ENCODE measurements at regions of chr13 and their contacts with region 1.

Region 1: DNA sequence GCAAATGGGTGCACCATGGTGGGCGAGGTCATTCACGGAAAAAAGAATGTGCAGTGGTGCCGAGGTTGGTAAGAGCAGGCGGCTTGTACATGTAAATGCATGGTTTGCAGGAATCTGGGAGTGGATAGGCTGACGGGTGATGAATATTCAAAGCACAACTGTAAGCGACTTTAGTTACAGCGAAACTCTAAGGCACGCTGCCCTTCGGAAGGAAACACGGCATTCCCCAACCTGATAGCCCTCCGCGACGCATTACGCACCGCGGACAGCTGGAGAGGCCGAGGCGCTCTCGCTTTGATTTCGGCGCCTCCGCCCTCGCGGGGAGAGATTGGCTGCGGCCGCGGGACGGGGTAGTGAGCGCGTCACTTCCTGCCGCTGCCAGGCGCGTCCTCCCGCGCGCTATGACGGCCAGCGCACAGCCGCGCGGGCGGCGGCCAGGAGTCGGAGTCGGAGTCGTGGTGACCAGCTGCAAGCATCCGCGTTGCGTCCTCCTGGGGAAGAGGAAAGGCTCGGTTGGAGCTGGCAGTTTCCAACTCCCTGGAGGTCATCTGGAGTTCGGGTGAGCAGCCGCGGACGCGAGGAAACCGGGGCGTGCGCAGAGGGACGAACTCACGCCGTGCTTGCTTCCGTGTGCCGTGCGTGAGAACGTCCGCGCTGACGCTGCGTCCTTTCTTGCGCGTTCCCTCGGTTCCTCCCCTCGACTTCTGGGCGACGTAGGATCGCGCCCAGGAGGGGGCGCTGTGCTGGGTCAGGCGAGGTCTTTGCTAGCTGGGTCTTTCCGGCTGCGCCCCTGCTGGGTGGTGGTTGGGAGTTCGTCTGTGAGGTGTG is at the start of gene NUDT15:
- DNase-seq: peak; percentile 88 to 99 (median 97)
- ATAC-seq: peak; percentile 90
- H3K4me3 ChIP-seq: peak within 1 kb of the TSS; percentile 81 to 96
- H3K4me3 Mint-ChIP-seq: peak within 1 kb of the TSS; percentile 97
- H3K27ac ChIP-seq: peak within 1 kb of the TSS; percentile 99
- H3K27ac Mint-ChIP-seq: peak within 1 kb of the TSS; percentile 98
- H3K4me1 ChIP-seq: peaks cover 20% of the 10 kb centered on the region
- H3K4me1 Mint-ChIP-seq: peaks cover 32% of the 10 kb centered on the region
- H3K27me3 ChIP-seq: no peaks in the 10 kb centered on the region
- H3K27me3 Mint-ChIP-seq: no peaks in the 10 kb centered on the region
- CTCF ChIP-seq: peak; percentile 99
- total RNA-seq, gene NUDT15: 23.8 to 24.9 TPM

Region 2: GRCh38 chr13:48000778-48001628 is 36.6 kb before region 1 on chr13 and contains the start of gene SUCLA2:
- CTCF ChIA-PET with region 1: no interaction called
- POLR2A ChIA-PET with region 1: interaction called, 5 read pairs
- intact Hi-C with region 1: loop called (anchors 1 kb)
- DNase-seq: peak; percentile 77 to 93 (median 88)
- ATAC-seq: peak; percentile 100
- H3K4me3 ChIP-seq: peak within 1 kb of the TSS; percentile 99
- H3K4me3 Mint-ChIP-seq: peak within 1 kb of the TSS; percentile 95
- H3K27ac ChIP-seq: peak within 1 kb of the TSS; percentile 72 to 81
- H3K27ac Mint-ChIP-seq: peak within 1 kb of the TSS; percentile 91
- H3K4me1 ChIP-seq: peaks cover 16% of the 10 kb centered on the region
- H3K4me1 Mint-ChIP-seq: peaks cover 35% of the 10 kb centered on the region
- H3K27me3 ChIP-seq: no peaks in the 10 kb centered on the region
- H3K27me3 Mint-ChIP-seq: no peaks in the 10 kb centered on the region
- CTCF ChIP-seq: no peak
- total RNA-seq, gene SUCLA2: 20.8 to 22.9 TPM

Region 3: GRCh38 chr13:48014359-48014758 is 23.2 kb before region 1 on chr13:
- CTCF ChIA-PET with region 1: interaction called, 11 read pairs
- POLR2A ChIA-PET with region 1: no interaction called
- intact Hi-C with region 1: no loop called
- DNase-seq: no peak
- ATAC-seq: no peak
- H3K4me3 ChIP-seq: no peak overlapping the region
- H3K4me3 Mint-ChIP-seq: no peak overlapping the region
- H3K27ac ChIP-seq: no peak overlapping the region
- H3K27ac Mint-ChIP-seq: no peak overlapping the region
- H3K4me1 ChIP-seq: no peaks in the 10 kb centered on the region
- H3K4me1 Mint-ChIP-seq: no peaks in the 10 kb centered on the region
- H3K27me3 ChIP-seq: no peaks in the 10 kb centered on the region
- H3K27me3 Mint-ChIP-seq: no peaks in the 10 kb centered on the region
- CTCF ChIP-seq: no peak

Region 4: DNA sequence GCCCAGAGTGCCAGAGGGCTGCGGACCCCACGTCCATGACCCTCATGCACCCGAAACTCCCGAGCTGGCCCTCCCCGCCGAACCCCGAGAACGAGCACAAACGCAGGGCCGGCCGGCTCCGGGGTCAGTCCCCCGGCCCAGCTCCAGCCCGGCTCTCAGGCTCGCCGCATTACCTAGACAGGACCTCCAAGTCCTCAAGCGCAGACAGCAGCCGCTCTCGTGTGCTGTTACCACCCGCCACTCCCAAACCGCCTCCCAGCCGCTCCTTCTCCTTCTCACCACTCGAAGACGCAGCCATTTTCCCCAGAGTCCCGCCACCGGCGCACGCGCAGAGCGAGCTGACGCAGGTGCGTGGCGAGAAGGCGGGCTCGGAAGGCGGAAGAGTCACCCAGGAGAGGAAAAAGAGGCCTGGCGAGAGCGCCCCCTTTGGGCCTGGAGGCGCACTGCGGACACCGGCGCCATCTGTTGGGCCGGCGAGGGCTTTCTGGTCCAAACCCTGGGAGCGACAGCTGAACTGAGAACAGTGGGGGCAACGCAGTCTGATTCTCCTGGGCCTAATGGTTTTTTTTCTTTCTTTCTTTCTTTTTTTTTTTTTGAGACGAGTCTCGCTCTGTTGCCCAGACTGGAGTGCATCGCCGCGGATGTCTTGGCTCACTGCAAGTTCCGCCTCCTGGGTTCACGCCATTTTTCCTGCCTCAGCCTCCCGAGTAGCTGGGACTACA is 57.4 kb after region 1 on chr13 and contains the start of gene MED4:
- CTCF ChIA-PET with region 1: interaction called, 19 read pairs
- POLR2A ChIA-PET with region 1: interaction called, 40 read pairs
- intact Hi-C with region 1: loop called (anchors 1 kb)
- DNase-seq: peak; percentile 96 to 99 (median 97)
- ATAC-seq: peak; percentile 98
- H3K4me3 ChIP-seq: peak within 1 kb of the TSS; percentile 90 to 96
- H3K4me3 Mint-ChIP-seq: peak within 1 kb of the TSS; percentile 96
- H3K27ac ChIP-seq: peak within 1 kb of the TSS; percentile 90 to 92
- H3K27ac Mint-ChIP-seq: peak within 1 kb of the TSS; percentile 97
- H3K4me1 ChIP-seq: peaks cover 21% of the 10 kb centered on the region
- H3K4me1 Mint-ChIP-seq: peaks cover 45% of the 10 kb centered on the region
- H3K27me3 ChIP-seq: no peaks in the 10 kb centered on the region
- H3K27me3 Mint-ChIP-seq: no peaks in the 10 kb centered on the region
- CTCF ChIP-seq: peak; percentile 100
- total RNA-seq, gene MED4: 60.8 to 63.6 TPM

Region 5: GRCh38 chr13:48155848-48156247 is 118.3 kb after region 1 on chr13:
- CTCF ChIA-PET with region 1: no interaction called
- POLR2A ChIA-PET with region 1: no interaction called
- intact Hi-C with region 1: loop called in 1 of 2 experiments (anchors 1 kb)
- DNase-seq: peak in 6 of 9 experiments; percentile 14 to 90 (median 46)
- ATAC-seq: peak; percentile 71
- H3K4me3 ChIP-seq: peak overlapping the region in 1 of 2 experiments; percentile 37
- H3K4me3 Mint-ChIP-seq: peak overlapping the region; percentile 44
- H3K27ac ChIP-seq: peak overlapping the region; percentile 61 to 89
- H3K27ac Mint-ChIP-seq: peak overlapping the region; percentile 96
- H3K4me1 ChIP-seq: peaks cover 75% of the 10 kb centered on the region
- H3K4me1 Mint-ChIP-seq: peaks cover 81% of the 10 kb centered on the region
- H3K27me3 ChIP-seq: no peaks in the 10 kb centered on the region
- H3K27me3 Mint-ChIP-seq: no peaks in the 10 kb centered on the region
- CTCF ChIP-seq: no peak

Region 6: DNA sequence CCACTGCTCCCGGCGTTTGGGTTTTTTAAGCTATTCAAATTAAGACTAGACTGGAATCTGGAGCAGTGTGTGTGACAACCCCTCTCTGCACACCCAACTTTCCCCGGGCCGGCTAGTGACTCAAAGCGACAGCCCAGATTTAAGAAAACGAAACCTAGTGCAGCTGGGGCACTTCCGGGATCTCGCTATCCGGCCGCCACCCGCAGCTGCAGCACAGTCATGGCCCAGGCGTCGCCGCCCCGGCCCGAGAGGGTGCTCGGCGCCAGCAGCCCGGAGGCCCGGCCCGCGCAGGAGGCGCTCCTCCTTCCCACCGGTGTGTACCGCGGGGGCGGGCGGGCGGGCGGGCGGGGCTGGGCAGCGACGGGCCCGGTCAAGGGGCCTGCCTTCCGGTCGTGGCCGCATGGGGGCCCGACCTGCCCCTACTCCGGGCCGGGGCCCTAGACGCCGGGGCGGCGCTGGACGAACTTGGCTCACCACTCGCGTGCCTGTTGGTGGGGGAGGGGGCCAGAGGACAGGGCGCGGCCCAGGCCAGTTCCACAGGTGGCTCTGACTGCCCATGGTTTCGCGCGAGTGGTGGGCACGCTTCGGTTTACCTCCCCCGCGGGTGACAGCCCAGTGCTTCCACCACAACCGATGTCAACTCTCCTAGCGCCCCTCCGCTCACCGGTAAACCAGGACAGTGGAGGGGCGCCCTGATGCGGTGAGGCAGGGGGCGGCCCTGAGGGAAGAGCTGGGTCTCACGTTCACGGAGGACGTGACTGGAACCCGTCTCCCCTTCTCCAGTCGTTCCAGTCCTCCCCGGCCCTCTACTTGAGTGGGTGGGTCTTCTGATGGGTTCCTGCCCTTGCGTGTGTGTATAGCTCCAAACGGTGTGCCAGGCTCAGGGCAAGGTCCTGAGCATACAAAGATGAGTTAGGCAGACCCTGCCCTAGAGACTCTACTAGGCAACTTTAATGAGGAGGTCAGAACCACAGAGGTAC is 1458.5 kb after region 1 on chr13 and contains the start of gene PHF11:
- CTCF ChIA-PET with region 1: no interaction called
- POLR2A ChIA-PET with region 1: no interaction called
- intact Hi-C with region 1: loop called in 1 of 2 experiments (anchors 2 kb)
- DNase-seq: peak; percentile 67 to 94 (median 87)
- ATAC-seq: peak; percentile 80
- H3K4me3 ChIP-seq: peak within 1 kb of the TSS; percentile 68 to 88
- H3K4me3 Mint-ChIP-seq: peak within 1 kb of the TSS; percentile 96
- H3K27ac ChIP-seq: peak within 1 kb of the TSS; percentile 90 to 96
- H3K27ac Mint-ChIP-seq: peak within 1 kb of the TSS; percentile 99
- H3K4me1 ChIP-seq: peaks cover 20% of the 10 kb centered on the region
- H3K4me1 Mint-ChIP-seq: peaks cover 47% of the 10 kb centered on the region
- H3K27me3 ChIP-seq: no peaks in the 10 kb centered on the region
- H3K27me3 Mint-ChIP-seq: no peaks in the 10 kb centered on the region
- CTCF ChIP-seq: no peak
- total RNA-seq, gene PHF11: 93.9 to 98.3 TPM

Measured in CD8-positive, alpha-beta T cell (primary cell).